Endothelial cell of umbilical vein (primary cell): ENCODE measurements at regions of chr2 and their contacts with region 1.

Region 1: GRCh38 chr2:236946871-236947270 is 138.8 kb upstream of the COPS8 start:
- DNase-seq: peak; percentile 98
- H3K4me3 ChIP-seq: no peak overlapping the region
- H3K27ac ChIP-seq: peak overlapping the region; percentile 69
- H3K4me1 ChIP-seq: peaks cover 11% of the 10 kb centered on the region
- H3K27me3 ChIP-seq: no peaks in the 10 kb centered on the region
- CTCF ChIP-seq: no peak
- POLR2A ChIP-seq: peak; percentile 73

Region 2: GRCh38 chr2:236576087-236576486 is 370.8 kb before region 1 on chr2:
- CTCF ChIA-PET with region 1: no interaction called
- POLR2A ChIA-PET with region 1: no interaction called
- dilution Hi-C with region 1: no loop called
- intact Hi-C with region 1: loop called (anchors 2 kb)
- DNase-seq: peak; percentile 77
- H3K4me3 ChIP-seq: no peak overlapping the region
- H3K27ac ChIP-seq: peak overlapping the region; percentile 9
- H3K4me1 ChIP-seq: peaks cover 59% of the 10 kb centered on the region
- H3K27me3 ChIP-seq: no peaks in the 10 kb centered on the region
- CTCF ChIP-seq: peak; percentile 11 to 48
- POLR2A ChIP-seq: no peak

Region 3: DNA sequence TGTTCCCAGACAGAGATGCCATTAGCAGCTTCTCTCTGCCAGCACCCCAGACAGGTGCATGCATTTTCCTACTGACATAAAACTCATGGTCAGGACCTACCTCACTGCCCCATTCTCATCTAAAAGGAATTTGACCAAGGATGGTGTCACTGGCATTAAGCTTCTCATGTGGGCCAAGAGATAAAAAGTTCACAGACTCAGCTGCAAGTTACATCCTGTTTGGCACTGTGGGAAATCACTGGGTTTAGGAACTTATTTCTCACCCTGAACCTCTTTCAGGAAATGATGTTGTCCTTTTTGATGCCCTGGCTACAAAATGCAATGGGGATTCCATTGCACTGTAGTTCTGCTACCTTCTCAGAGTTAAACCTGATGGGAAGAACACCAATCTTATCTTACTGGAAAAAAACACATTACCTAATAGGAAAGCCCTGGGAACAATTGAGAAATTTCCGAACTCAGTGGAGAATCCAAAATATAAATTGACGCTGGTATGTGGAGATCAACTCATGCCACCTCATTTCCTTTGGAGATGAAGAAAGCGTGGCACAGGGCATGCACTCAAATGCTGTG is 113.3 kb before region 1 on chr2:
- CTCF ChIA-PET with region 1: no interaction called
- POLR2A ChIA-PET with region 1: no interaction called
- dilution Hi-C with region 1: no loop called
- intact Hi-C with region 1: loop called (anchors 2 kb)
- DNase-seq: peak; percentile 95
- H3K4me3 ChIP-seq: no peak overlapping the region
- H3K27ac ChIP-seq: peak overlapping the region; percentile 94
- H3K4me1 ChIP-seq: peaks cover 23% of the 10 kb centered on the region
- H3K27me3 ChIP-seq: no peaks in the 10 kb centered on the region
- CTCF ChIP-seq: no peak
- POLR2A ChIP-seq: no peak

Region 4: GRCh38 chr2:236998236-236998635 is 51.4 kb after region 1 on chr2:
- CTCF ChIA-PET with region 1: interaction called, 3 read pairs
- POLR2A ChIA-PET with region 1: interaction called, 3 read pairs
- dilution Hi-C with region 1: no loop called
- intact Hi-C with region 1: loop called (anchors 5 kb)
- DNase-seq: peak; percentile 88
- H3K4me3 ChIP-seq: peak overlapping the region in 1 of 3 experiments; percentile 5
- H3K27ac ChIP-seq: peak overlapping the region; percentile 88
- H3K4me1 ChIP-seq: peaks cover 33% of the 10 kb centered on the region
- H3K27me3 ChIP-seq: no peaks in the 10 kb centered on the region
- CTCF ChIP-seq: no peak
- POLR2A ChIP-seq: no peak